ENCODE measurements at regions of chr1 and their contacts with region 1.

Region 1: DNA sequence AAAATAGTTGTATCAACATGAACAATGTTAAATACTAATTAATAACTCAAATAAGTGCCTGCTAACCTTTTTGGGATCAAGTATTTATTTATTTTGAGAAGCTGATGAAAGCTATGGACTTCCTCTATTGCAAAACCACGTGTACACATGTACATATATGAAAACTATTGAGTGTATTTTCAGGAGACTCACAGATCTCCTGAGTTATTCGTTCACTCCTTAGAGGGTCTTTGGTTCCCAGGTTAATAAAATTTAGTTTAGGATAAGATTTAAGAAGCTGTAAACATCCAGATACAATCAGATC is 130.5 kb downstream of the DISC1 start:
- DNase-seq: no peak
- CTCF ChIP-seq: no peak

Region 2: GRCh38 chr1:231734417-231734816 is 22.6 kb before region 1 on chr1:
- CTCF ChIA-PET with region 1: interaction called, 16 read pairs
- POLR2A ChIA-PET with region 1: no interaction called
- DNase-seq: no peak
- CTCF ChIP-seq: no peak

Region 3: GRCh38 chr1:231770506-231771175 is 13.6 kb after region 1 on chr1:
- CTCF ChIA-PET with region 1: interaction called, 52 read pairs
- POLR2A ChIA-PET with region 1: no interaction called
- DNase-seq: no peak
- CTCF ChIP-seq: no peak

Region 4: GRCh38 chr1:231806623-231807495 is 49.8 kb after region 1 on chr1:
- CTCF ChIA-PET with region 1: interaction called, 22 read pairs
- POLR2A ChIA-PET with region 1: no interaction called
- DNase-seq: peak; percentile 58
- CTCF ChIP-seq: peak; percentile 59

Region 5: GRCh38 chr1:231844986-231845502 is 88.0 kb after region 1 on chr1:
- CTCF ChIA-PET with region 1: no interaction called
- POLR2A ChIA-PET with region 1: no interaction called
- DNase-seq: no peak
- CTCF ChIP-seq: no peak

Measured in GM10248 (cell line).